Dendritic cell treated with granulocyte-macrophage colony-stimulating factor and Interleukin-4, amounts not matched to agents 40 ng/mL and 50 ng/mL, for 4 days (primary cell): ENCODE measurements at regions of chr3 and their contacts with region 1.

Region 1: DNA sequence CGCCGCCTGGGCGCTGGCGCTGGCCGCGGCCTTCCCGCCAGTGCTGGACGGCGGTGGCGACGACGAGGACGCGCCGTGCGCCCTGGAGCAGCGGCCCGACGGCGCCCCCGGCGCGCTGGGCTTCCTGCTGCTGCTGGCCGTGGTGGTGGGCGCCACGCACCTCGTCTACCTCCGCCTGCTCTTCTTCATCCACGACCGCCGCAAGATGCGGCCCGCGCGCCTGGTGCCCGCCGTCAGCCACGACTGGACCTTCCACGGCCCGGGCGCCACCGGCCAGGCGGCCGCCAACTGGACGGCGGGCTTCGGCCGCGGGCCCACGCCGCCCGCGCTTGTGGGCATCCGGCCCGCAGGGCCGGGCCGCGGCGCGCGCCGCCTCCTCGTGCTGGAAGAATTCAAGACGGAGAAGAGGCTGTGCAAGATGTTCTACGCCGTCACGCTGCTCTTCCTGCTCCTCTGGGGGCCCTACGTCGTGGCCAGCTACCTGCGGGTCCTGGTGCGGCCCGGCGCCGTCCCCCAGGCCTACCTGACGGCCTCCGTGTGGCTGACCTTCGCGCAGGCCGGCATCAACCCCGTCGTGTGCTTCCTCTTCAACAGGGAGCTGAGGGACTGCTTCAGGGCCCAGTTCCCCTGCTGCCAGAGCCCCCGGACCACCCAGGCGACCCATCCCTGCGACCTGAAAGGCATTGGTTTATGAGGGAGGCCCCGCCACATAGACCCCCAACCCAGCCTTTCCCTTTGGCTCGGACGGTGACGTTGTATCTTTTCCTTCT is 1.0 kb downstream of the GPR27 start:
- H3K4me3 Mint-ChIP-seq: peak overlapping the region; percentile 79
- H3K27ac Mint-ChIP-seq: peak overlapping the region; percentile 66
- H3K4me1 Mint-ChIP-seq: peaks cover 50% of the 10 kb centered on the region
- H3K27me3 Mint-ChIP-seq: peaks cover 22% of the 10 kb centered on the region

Region 2: DNA sequence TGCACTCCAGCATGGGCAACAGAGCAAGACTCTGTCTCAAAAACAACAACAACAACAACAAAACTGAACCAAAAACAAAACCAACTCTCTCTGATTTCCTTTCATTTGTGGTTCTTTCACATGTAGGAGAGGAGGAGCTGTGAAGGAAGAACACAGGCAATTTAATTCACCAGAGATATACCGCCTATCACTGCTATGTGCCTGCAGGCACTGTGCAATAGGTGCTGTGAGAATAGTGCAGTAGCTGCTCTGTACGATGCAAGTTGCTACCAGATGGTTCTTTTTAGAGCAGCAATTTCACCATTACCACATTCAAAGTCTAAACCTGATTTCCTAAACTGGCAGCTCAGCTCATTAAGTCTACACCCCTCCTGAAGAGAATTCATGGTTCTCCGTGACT is 41.6 kb after region 1 on chr3:
- intact Hi-C with region 1: loop called (anchors 5 kb)
- H3K4me3 Mint-ChIP-seq: no peak overlapping the region
- H3K27ac Mint-ChIP-seq: no peak overlapping the region
- H3K4me1 Mint-ChIP-seq: peaks cover 17% of the 10 kb centered on the region
- H3K27me3 Mint-ChIP-seq: peaks cover 6% of the 10 kb centered on the region